ENCODE measurements at regions of chr17 and their contacts with region 1.

Region 1: GRCh38 chr17:64520359-64520758 is 13.6 kb downstream of the CEP95 start:
- DNase-seq: no peak

Region 2: DNA sequence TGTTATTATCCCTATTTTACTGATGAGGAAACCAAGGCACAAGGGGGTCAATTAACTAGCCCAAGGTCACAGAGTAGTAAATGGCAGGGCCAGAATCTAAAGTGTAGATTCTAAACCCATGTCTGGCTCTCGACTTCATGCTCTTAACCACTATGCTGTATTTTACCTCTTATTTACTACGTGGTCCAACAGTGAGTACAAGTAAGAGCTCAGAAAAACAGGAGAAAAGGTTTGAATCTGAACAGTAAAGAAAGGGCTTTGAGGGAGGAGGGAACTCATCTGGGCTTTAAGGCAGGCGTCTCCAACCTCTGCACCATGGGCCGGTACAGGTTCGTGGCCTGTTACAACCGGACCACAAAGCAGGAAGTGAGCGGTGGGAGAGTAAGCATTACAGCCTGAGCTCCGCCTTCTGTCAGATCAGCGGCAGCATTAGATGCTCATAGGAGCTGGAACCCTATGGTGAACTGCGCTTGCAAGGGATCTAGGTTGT is 78.9 kb after region 1 on chr17:
- intact Hi-C with region 1: loop called in 1 of 2 experiments (anchors 10 kb)
- DNase-seq: no peak

Region 3: DNA sequence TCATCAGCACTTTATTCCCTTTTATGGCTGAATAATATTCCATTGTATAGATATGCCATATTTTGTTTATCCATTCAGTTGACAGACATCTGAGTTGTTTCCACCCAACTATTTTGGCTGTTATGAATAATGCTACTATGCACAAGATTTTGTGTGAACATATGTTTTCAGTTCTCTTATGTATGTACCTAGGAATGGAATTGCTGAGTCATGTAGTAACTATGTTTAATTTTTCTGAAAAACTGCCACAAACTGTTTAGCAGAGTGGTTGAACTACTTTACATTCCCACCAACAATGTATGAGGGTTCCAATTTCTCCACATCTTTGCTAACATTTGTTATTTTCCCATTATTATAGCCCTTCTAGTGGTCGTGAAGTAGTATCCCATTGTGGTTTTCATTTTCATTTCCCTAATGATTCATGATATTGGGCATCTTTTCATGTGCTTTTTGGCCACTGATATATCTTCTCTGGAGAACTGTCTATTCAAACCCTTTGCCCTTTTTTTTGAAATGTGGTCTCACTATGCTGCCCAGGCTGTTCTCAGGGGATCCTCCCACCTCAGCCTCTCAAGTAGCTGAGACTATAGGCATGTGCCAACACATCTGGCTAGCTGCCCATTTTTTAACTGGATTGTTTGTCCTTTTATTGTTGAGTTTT is 115.4 kb after region 1 on chr17:
- intact Hi-C with region 1: no loop called
- DNase-seq: no peak